ENCODE measurements at regions of chr5 and their contacts with region 1.

Region 1: GRCh38 chr5:90488791-90489190 is 14.1 kb downstream of the POLR3G start:
- DNase-seq: peak; percentile 65
- ATAC-seq: peak; percentile 66
- H3K4me3 ChIP-seq: no peak overlapping the region
- H3K27ac ChIP-seq: no peak overlapping the region
- H3K4me1 ChIP-seq: peaks cover 2% of the 10 kb centered on the region; the same call in 1 of the 2 replicates
- H3K27me3 ChIP-seq: no peaks in the 10 kb centered on the region
- CTCF ChIP-seq: no peak
- POLR2A ChIP-seq: no peak
- RAD21 ChIP-seq: no peak

Region 2: GRCh38 chr5:88826646-88827585 is 1661.9 kb before region 1 on chr5:
- CTCF ChIA-PET with region 1: no interaction called
- POLR2A ChIA-PET with region 1: interaction called, 15 read pairs
- dilution Hi-C with region 1: no loop called
- in situ Hi-C with region 1: no loop called
- intact Hi-C with region 1: no loop called
- DNase-seq: peak; percentile 90
- ATAC-seq: peak; percentile 53
- H3K4me3 ChIP-seq: peak overlapping the region; percentile 27; the same call in 1 of the 2 replicates
- H3K27ac ChIP-seq: peak overlapping the region; percentile 68; the same call in 1 of the 2 replicates
- H3K4me1 ChIP-seq: peaks cover 13% of the 10 kb centered on the region
- H3K27me3 ChIP-seq: no peaks in the 10 kb centered on the region
- CTCF ChIP-seq: no peak
- POLR2A ChIP-seq: no peak
- RAD21 ChIP-seq: no peak